ENCODE measurements at regions of chr4 and their contacts with region 1.

Region 1: DNA sequence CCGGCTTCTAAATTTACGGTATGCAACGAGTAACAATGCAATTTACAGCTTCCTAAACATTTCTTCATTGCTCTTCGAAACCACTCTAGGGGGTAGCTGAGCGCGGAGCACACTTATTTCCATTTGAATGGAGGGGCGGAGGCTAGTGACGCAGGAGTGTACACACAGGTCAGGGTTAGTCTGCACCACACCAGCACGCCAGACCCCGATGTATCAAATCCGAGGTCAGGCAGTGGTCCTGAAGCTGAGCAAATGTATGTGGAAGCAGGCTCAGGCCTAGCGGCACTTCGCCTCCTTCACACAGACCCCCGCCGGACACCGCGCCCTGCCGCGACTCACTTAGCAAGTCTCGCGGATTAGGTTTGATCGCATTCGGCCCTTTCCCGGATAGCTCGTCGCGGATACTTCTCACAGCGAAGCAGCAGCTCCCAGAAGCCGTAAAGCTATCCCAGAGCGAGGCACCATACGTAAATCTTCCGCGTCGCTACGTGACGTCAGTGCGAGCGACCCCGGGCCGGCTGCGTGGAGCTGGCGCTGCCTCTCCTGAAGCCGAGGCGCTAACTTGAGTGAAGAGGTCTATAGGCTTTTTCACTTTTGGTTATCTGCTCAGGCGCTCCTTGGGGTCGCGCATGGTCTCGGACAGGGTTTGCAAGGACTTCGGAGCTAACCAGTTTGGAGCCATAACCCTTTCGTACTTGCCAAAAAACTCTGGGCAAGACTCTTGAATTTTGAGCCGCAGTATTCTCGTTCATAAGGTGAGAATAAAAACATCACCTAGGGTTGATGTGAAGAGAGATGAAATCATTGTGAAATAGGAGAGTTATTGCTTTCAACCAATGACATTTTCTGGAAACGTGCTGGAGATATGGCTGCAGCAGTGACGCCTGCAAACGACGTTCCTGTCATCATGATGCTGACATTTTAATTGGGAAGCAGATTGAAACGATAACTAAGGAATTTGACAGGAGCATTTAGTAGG is at the start of gene AASDH:
- DNase-seq: peak; percentile 91 to 99 (median 96)
- ATAC-seq: peak; percentile 88
- H3K4me3 ChIP-seq: peak within 1 kb of the TSS; percentile 79 to 82
- H3K4me3 Mint-ChIP-seq: peak within 1 kb of the TSS; percentile 97
- H3K27ac ChIP-seq: peak within 1 kb of the TSS; percentile 93 to 94
- H3K27ac Mint-ChIP-seq: peak within 1 kb of the TSS; percentile 99
- H3K4me1 ChIP-seq: peaks cover 21% of the 10 kb centered on the region
- H3K4me1 Mint-ChIP-seq: peaks cover 46% of the 10 kb centered on the region
- H3K27me3 ChIP-seq: no peaks in the 10 kb centered on the region
- H3K27me3 Mint-ChIP-seq: no peaks in the 10 kb centered on the region
- CTCF ChIP-seq: no peak
- total RNA-seq, gene AASDH: 9.1 to 9.8 TPM

Region 2: DNA sequence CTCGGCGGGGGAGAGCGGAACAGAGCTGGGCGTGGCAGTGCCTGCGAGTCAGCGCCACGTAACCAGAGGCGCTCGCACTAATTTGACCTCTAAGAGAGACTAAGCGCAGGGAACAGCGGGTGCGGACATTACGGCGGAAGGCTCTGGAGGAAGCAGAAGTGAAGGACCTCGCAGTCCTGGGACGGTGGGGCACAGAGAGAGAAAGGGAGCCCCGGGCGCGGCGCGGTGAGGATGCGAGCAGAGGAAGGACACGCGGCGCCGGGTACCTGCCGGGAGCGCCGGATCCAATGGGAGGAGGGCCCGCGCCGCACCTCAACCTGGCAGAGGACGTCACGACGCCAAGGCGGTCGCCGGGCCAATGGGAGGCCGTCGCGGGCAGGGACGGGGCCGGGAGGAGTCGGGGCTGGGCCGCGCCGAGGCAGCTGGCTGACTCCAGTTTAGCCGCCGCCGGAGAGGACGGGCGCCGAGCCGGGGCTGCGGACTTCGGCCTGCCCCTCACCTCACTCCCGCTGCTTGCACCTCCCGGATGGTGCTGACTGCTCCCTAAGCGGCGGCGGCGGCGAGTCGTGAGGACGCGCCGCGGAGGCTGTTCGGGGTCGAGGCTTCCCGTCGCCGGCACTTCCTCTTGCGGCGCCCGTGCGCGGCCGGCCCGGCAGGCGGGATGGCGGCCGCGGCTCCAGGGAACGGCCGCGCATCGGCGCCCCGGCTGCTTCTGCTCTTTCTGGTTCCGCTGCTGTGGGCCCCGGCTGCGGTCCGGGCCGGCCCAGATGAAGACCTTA is 991.6 kb before region 1 on chr4 and contains the start of gene TMEM165:
- CTCF ChIA-PET with region 1: no interaction called
- POLR2A ChIA-PET with region 1: interaction called, 3 read pairs
- intact Hi-C with region 1: loop called in 1 of 2 experiments (anchors 1 kb)
- DNase-seq: peak; percentile 72 to 93 (median 86)
- ATAC-seq: peak; percentile 94
- H3K4me3 ChIP-seq: peak within 1 kb of the TSS; percentile 68 to 74
- H3K4me3 Mint-ChIP-seq: peak within 1 kb of the TSS; percentile 97
- H3K27ac ChIP-seq: peak within 1 kb of the TSS; percentile 83 to 93
- H3K27ac Mint-ChIP-seq: peak within 1 kb of the TSS; percentile 98
- H3K4me1 ChIP-seq: peaks cover 36% of the 10 kb centered on the region
- H3K4me1 Mint-ChIP-seq: peaks cover 38% of the 10 kb centered on the region
- H3K27me3 ChIP-seq: no peaks in the 10 kb centered on the region
- H3K27me3 Mint-ChIP-seq: no peaks in the 10 kb centered on the region
- CTCF ChIP-seq: peak; percentile 0
- total RNA-seq, gene TMEM165: 31.0 to 31.5 TPM

Region 3: GRCh38 chr4:55853484-55854046 is 533.7 kb before region 1 on chr4 and contains the start of gene EXOC1:
- CTCF ChIA-PET with region 1: no interaction called
- POLR2A ChIA-PET with region 1: no interaction called
- intact Hi-C with region 1: loop called (anchors 1 to 5 kb)
- DNase-seq: peak; percentile 90 to 98 (median 97)
- ATAC-seq: peak; percentile 96
- H3K4me3 ChIP-seq: peak within 1 kb of the TSS; percentile 96
- H3K4me3 Mint-ChIP-seq: peak within 1 kb of the TSS; percentile 36
- H3K27ac ChIP-seq: peak within 1 kb of the TSS; percentile 70 to 86
- H3K27ac Mint-ChIP-seq: peak within 1 kb of the TSS; percentile 64
- H3K4me1 ChIP-seq: peaks cover 40% of the 10 kb centered on the region
- H3K4me1 Mint-ChIP-seq: peaks cover 38% of the 10 kb centered on the region
- H3K27me3 ChIP-seq: no peaks in the 10 kb centered on the region
- H3K27me3 Mint-ChIP-seq: no peaks in the 10 kb centered on the region
- CTCF ChIP-seq: no peak
- total RNA-seq, gene EXOC1: 12.1 to 14.5 TPM

Region 4: DNA sequence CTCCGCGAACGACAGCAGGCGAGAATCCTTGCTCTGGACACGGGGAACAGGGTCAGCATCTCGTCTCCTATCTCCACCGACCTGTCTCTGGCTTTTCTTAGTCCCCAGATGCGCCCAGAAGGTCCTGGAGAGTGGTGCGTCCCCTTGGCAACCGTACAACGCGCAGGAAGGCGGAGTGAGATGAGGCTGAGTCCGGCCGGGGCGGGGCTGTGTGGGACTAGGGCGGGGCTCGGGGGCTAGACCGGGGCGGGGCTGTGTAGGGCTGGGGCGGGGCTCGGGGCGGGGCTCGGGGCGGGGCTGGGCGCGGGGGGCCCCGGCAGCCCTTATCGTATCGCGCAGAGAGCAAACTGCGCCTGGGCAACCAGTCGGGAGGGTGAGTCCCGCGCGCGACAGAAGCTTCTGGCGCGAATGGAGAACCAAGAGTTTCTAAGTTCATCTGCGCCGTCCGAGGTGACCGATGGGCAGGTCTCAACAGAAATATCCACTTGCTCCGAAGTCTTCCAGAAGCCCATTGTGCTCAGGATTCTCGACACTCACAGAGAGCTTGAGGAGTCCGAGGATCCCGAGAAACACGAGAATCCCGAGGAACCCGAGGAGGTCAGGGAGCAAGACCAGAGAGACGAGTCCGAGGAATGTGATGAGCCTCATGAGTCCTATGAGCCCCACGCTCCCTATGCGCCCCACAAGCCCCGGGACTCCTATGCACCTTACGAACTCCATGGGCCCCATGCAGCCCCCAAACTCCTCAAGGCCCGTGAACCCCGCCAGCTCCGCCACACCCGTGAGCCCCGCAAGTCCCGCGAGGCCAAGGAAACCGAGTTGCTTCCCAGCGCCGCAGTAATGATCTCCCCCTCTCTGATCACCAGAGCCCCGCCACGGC is 143.2 kb after region 1 on chr4:
- CTCF ChIA-PET with region 1: no interaction called
- POLR2A ChIA-PET with region 1: no interaction called
- intact Hi-C with region 1: loop called in 1 of 2 experiments (anchors 5 kb)
- DNase-seq: peak; percentile 51 to 86 (median 81)
- ATAC-seq: peak; percentile 96
- H3K4me3 ChIP-seq: peak overlapping the region; percentile 59 to 87
- H3K4me3 Mint-ChIP-seq: no peak overlapping the region
- H3K27ac ChIP-seq: no peak overlapping the region
- H3K27ac Mint-ChIP-seq: no peak overlapping the region
- H3K4me1 ChIP-seq: peaks cover 6% of the 10 kb centered on the region
- H3K4me1 Mint-ChIP-seq: no peaks in the 10 kb centered on the region
- H3K27me3 ChIP-seq: peaks cover 3 to 5% of the 10 kb centered on the region in 2 experiments
- H3K27me3 Mint-ChIP-seq: peaks cover 9% of the 10 kb centered on the region
- CTCF ChIP-seq: no peak

Measured in CD8-positive, alpha-beta T cell (primary cell).